ENCODE measurements at regions of chr14 and their contacts with region 1.

Region 1: DNA sequence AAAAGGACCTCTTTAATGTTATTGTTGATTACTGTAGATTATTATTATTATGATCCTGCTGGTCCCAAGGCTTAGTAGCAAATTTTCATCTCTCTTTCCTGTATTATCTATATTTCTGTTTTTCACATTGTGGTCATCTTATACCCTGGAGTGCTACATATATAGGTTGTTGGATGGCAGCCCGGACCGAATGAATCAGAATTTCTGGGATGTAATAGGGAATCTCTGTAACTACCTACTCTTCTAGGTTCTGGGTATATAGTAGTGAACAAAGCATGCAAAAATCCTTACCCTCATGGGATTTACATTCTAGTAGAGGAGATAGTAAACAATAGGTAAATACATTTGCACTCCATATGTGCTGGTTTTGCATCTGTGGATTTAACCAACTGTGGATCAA is 31.4 kb downstream of the NUBPL start:
- DNase-seq: no peak
- H3K4me3 ChIP-seq: no peak overlapping the region
- H3K27ac ChIP-seq: no peak overlapping the region
- H3K4me1 ChIP-seq: no peaks in the 10 kb centered on the region
- CTCF ChIP-seq: no peak

Region 2: DNA sequence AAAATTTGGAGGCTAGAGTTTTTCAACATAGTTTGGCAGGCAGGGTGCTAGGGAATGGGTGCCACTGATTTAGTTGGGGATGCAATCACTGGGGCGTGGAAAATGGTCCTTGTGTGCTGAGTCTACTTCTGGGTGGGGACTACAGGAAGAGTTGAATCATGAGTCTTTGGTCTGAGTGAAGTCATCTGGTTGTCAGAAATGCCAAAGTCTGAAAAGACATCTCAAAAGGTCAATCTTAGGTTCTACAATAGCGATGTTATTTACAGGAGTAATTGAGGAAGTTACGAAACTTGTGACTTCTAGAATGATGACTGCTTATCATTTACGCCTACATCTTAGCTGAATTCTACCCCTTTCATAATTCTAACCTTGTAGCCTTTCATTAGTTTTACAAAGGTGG is 177.6 kb after region 1 on chr14:
- CTCF ChIA-PET with region 1: no interaction called
- POLR2A ChIA-PET with region 1: no interaction called
- intact Hi-C with region 1: loop called (anchors 10 kb)
- DNase-seq: no peak
- H3K4me3 ChIP-seq: no peak overlapping the region
- H3K27ac ChIP-seq: no peak overlapping the region
- H3K4me1 ChIP-seq: no peaks in the 10 kb centered on the region
- CTCF ChIP-seq: no peak

Measured in OCI-LY7 (cell line).